GM18951 (cell line): ENCODE measurements at regions of chrX and their contacts with region 1.

Region 1: DNA sequence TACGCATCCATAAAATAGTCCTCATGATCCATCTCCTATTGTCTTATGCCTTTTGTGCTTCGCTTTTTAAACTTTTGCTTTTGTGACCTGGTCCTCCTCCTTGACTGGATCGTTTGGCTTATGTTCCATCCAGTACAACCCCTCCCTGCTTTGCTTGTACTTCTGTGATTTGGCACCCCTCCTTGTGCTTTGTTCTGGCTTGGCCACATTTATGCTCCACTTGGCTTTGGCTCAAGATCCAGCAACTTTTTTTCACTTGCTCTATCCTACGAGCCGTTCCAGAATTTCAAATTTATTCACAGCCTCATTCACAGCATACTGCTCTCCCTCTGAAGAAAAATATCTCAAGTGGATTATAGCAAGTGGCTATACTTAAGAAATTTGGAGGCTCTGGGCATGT is 28.0 kb upstream of the GLRA2 start:
- POLR2A ChIP-seq: no peak

Region 2: DNA sequence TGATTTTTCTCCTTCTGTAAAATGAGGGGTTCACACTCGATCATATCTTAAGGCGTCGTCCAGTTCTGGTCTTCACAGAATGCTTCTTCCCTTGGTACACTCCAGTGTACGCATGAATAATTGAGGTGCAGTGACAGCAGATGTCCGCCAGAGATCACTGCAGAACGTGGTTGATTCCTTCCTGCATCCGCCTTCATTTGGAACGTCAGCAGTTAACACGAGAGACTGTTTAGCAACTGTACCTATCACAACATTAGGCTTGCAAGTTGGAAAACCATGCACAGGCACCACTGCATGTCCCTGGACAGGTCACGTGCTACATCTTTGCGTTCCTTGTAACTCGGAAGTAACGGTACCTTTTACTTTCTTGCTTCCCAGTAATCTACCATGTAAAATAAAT is 405.6 kb before region 1 on chrX:
- in situ Hi-C with region 1: loop called (anchors 25 kb)
- POLR2A ChIP-seq: no peak

Region 3: DNA sequence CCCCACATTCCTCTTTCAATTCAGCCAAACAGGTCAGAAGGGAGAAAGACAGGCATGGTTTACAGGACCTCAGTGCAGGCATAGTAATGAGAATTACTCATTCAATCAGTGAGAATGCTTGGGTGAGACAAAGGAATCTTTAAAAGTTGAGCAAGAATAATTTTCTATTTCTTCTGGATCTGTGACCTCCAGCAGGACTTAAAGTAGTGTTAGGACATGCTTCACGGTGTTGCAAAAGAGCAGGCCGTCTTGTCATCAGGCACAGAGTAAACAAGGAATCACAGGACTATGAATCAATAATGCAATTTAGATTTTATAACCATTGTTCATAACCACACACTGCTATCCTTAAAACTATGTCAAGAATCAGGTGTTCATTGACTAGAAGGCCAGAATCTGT is 102.6 kb before region 1 on chrX:
- in situ Hi-C with region 1: no loop called
- POLR2A ChIP-seq: no peak

Region 4: DNA sequence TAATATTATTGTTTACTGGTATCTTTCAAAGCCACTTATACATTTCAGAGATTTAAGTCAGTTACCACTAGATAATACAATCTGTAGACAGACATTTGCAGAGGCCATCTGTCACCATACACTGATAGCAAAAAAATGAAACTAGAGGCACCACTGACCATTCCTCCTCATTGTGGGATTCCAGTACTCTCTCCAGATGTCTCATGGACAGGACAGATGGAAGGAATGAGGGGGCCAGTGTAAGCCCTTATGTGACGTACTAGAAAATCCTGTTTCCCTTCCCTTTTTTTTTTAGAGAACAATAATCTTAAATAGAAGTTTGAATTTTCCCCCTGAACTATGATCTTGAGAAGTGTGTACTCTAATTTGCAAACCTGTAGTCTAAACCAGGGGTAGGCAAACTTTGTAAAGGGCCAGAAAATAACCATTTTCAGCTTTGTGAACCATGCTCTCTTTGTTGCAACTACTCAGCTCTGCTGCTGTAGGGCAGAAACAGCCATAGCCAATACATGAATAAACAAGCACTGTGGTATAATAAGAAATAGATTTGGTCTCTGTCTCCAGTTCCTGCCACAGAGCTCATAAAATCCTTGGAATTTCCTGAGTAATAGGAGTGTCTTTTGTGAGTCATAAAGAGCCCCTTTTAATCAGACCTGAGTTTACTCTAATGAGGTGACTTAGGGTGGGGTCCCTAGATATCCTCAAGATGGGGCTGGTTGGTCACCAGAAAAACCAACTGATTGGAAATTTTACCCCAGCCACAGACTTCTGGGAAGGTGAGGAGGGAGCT is 462.3 kb after region 1 on chrX:
- in situ Hi-C with region 1: no loop called
- POLR2A ChIP-seq: no peak